Right ventricle myocardium inferior (tissue), 1 donor: ENCODE measurements at regions of chr5 and their contacts with region 1.

Region 1: GRCh38 chr5:139149477-139150199 is 48.5 kb downstream of the SIL1 start:
- DNase-seq: no peak
- ATAC-seq: peak; percentile 60

Region 2: GRCh38 chr5:139177809-139178588 is 28.4 kb after region 1 on chr5:
- intact Hi-C with region 1: loop called (anchors 2 kb)
- DNase-seq: peak; percentile 72
- ATAC-seq: peak; percentile 94